ENCODE measurements at regions of chr9 and their contacts with region 1.

Region 1: DNA sequence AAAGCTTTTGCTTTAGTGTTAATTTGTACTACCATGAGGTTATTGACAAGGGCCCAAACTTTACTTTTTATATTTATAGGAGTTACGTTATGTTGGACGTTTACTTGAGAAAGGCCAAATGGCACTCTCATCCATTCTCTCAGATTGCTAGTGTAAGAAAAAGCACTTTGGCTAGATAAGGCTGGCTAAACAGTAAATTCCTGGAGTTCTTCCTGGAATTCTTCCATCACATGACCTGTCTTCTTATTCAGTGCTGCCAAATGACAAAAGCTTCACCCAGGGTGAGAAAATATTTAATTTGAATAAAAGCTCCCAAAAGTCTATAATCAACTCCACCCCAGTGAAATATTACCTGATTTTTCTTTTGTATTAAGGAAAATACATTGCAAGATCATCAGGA is 1568.9 kb upstream of the ACO1 start:
- DNase-seq: no peak
- ATAC-seq: no peak
- H3K4me3 ChIP-seq: no peak overlapping the region
- H3K27ac ChIP-seq: no peak overlapping the region
- H3K4me1 ChIP-seq: no peaks in the 10 kb centered on the region
- H3K27me3 ChIP-seq: no peaks in the 10 kb centered on the region
- CTCF ChIP-seq: no peak

Region 2: GRCh38 chr9:30851600-30851999 is 36.0 kb after region 1 on chr9:
- CTCF ChIA-PET with region 1: no interaction called
- POLR2A ChIA-PET with region 1: no interaction called
- in situ Hi-C with region 1: no loop called
- intact Hi-C with region 1: loop called (anchors 2 kb)
- DNase-seq: no peak
- ATAC-seq: no peak
- H3K4me3 ChIP-seq: no peak overlapping the region
- H3K27ac ChIP-seq: no peak overlapping the region
- H3K4me1 ChIP-seq: no peaks in the 10 kb centered on the region
- H3K27me3 ChIP-seq: no peaks in the 10 kb centered on the region
- CTCF ChIP-seq: no peak